IMR-90 (cell line): ENCODE measurements at regions of chr10 and their contacts with region 1.

Region 1: GRCh38 chr10:13776861-13777311 is 190.1 kb downstream of the PRPF18 start:
- DNase-seq: peak; percentile 35
- ATAC-seq: no peak
- H3K4me3 ChIP-seq: no peak overlapping the region
- H3K27ac ChIP-seq: peak overlapping the region; percentile 35; the same call in 1 of the 2 replicates
- H3K4me1 ChIP-seq: peaks cover 11% of the 10 kb centered on the region
- H3K27me3 ChIP-seq: no peaks in the 10 kb centered on the region
- CTCF ChIP-seq: no peak
- POLR2A ChIP-seq: no peak
- RAD21 ChIP-seq: no peak

Region 2: GRCh38 chr10:13613519-13613918 is 163.4 kb before region 1 on chr10:
- CTCF ChIA-PET with region 1: no interaction called
- POLR2A ChIA-PET with region 1: no interaction called
- dilution Hi-C with region 1: no loop called
- in situ Hi-C with region 1: loop called (anchors 10 kb)
- intact Hi-C with region 1: loop called (anchors 1 kb)
- DNase-seq: peak; percentile 68
- ATAC-seq: peak; percentile 50
- H3K4me3 ChIP-seq: no peak overlapping the region
- H3K27ac ChIP-seq: no peak overlapping the region
- H3K4me1 ChIP-seq: peaks cover 8% of the 10 kb centered on the region; the same call in 1 of the 2 replicates
- H3K27me3 ChIP-seq: no peaks in the 10 kb centered on the region
- CTCF ChIP-seq: peak; percentile 63
- POLR2A ChIP-seq: no peak
- RAD21 ChIP-seq: peak; percentile 72

Region 3: GRCh38 chr10:13659897-13660550 is 116.9 kb before region 1 on chr10:
- CTCF ChIA-PET with region 1: interaction called, 10 read pairs
- POLR2A ChIA-PET with region 1: interaction called, 12 read pairs
- dilution Hi-C with region 1: no loop called
- in situ Hi-C with region 1: loop called (anchors 5 kb)
- intact Hi-C with region 1: loop called (anchors 1 kb)
- DNase-seq: peak; percentile 50
- ATAC-seq: peak; percentile 81
- H3K4me3 ChIP-seq: no peak overlapping the region
- H3K27ac ChIP-seq: peak overlapping the region; percentile 18; the same call in 1 of the 2 replicates
- H3K4me1 ChIP-seq: peaks cover 14% of the 10 kb centered on the region
- H3K27me3 ChIP-seq: no peaks in the 10 kb centered on the region
- CTCF ChIP-seq: peak; percentile 82
- POLR2A ChIP-seq: no peak
- RAD21 ChIP-seq: peak; percentile 92

Region 4: DNA sequence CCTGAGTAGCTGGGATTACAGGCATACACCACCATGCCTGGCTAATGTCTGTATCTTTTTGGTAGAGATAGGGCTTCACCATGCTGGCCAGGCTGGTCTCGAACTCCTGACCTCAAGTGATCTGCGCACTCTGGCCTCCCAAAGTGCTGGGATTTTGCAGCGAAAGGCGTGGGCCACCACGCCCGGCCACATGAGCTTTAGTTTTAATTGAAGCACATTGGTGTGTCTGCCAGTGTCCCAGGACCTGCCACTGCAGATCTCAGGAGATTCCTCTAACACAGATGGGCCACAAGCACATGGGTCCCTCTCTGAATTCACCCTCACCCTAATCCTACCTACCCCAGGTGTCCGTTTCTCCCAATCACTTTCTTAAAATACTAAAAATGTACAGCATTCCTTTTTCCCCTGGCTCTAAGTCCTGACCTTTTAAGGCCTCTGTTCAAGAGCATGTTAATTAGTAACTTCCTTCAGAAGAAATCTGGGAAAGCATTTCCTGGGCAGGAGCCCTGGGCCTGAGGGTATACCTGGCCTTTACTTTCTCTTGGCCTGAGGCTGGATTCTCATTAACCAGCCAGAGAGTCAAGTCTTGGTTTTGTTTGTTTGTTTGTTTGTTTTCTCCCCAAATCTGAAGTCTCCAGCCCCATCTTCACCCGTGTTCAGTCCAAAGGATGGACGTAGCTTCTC is 107.6 kb before region 1 on chr10:
- CTCF ChIA-PET with region 1: no interaction called
- POLR2A ChIA-PET with region 1: no interaction called
- dilution Hi-C with region 1: no loop called
- in situ Hi-C with region 1: loop called (anchors 5 kb)
- intact Hi-C with region 1: no loop called
- DNase-seq: no peak
- ATAC-seq: no peak
- H3K4me3 ChIP-seq: no peak overlapping the region
- H3K27ac ChIP-seq: no peak overlapping the region
- H3K4me1 ChIP-seq: peaks cover 8% of the 10 kb centered on the region; the same call in 1 of the 2 replicates
- H3K27me3 ChIP-seq: no peaks in the 10 kb centered on the region
- CTCF ChIP-seq: no peak
- POLR2A ChIP-seq: no peak
- RAD21 ChIP-seq: no peak

Region 5: DNA sequence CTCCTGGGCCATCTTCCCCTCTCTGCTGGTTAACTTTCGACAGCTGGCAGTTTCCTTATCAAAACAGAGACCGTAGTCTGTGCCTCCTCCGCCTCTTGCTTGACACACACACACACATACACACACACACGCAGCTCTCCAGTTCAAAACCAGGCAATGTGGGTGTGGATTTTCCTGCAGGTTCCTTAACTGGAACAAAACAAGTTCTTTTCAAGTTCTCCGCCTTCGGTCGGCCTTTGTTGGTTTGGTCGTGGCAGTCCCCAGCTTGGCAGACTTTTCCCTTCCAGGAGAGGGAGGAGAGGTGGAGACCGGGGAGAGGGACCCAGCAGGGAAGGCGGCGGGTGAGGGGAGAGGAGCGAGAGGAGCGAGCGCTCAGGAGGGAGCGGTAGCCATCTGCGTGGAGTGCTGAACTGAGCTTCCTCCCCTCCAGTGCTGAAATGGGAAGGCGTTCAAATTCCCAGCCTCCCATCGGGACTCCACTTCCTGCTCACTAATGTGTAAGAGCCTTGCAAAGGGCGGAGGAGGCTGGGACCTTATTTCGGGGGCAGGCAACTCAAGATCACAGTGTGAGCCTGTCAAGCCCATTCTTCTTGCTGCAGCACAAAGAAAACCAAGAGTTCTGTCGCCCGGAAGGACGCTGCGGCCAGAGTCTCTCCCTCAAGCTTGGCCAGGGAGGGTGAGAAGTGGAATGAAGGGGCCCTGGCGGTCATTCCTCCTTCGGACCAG is 69.6 kb before region 1 on chr10:
- CTCF ChIA-PET with region 1: no interaction called
- POLR2A ChIA-PET with region 1: interaction called, 3 read pairs
- dilution Hi-C with region 1: no loop called
- in situ Hi-C with region 1: no loop called
- intact Hi-C with region 1: loop called (anchors 2 kb)
- DNase-seq: peak; percentile 95
- ATAC-seq: peak; percentile 89
- H3K4me3 ChIP-seq: peak overlapping the region; percentile 57
- H3K27ac ChIP-seq: peak overlapping the region; percentile 85
- H3K4me1 ChIP-seq: peaks cover 22% of the 10 kb centered on the region
- H3K27me3 ChIP-seq: no peaks in the 10 kb centered on the region
- CTCF ChIP-seq: no peak
- POLR2A ChIP-seq: peak; percentile 17; the same call in 1 of the 2 replicates
- RAD21 ChIP-seq: peak; percentile 20; the same call in 1 of the 2 replicates

Region 6: GRCh38 chr10:13820119-13820956 is 43.5 kb after region 1 on chr10:
- CTCF ChIA-PET with region 1: no interaction called
- POLR2A ChIA-PET with region 1: no interaction called
- dilution Hi-C with region 1: no loop called
- in situ Hi-C with region 1: no loop called
- intact Hi-C with region 1: no loop called
- DNase-seq: no peak
- ATAC-seq: no peak
- H3K4me3 ChIP-seq: no peak overlapping the region
- H3K27ac ChIP-seq: no peak overlapping the region
- H3K4me1 ChIP-seq: peaks cover 8% of the 10 kb centered on the region
- H3K27me3 ChIP-seq: no peaks in the 10 kb centered on the region
- CTCF ChIP-seq: no peak
- POLR2A ChIP-seq: no peak
- RAD21 ChIP-seq: no peak